Spleen (tissue), 13 donors: ENCODE measurements at regions of chr13 and their contacts with region 1.

Region 1: DNA sequence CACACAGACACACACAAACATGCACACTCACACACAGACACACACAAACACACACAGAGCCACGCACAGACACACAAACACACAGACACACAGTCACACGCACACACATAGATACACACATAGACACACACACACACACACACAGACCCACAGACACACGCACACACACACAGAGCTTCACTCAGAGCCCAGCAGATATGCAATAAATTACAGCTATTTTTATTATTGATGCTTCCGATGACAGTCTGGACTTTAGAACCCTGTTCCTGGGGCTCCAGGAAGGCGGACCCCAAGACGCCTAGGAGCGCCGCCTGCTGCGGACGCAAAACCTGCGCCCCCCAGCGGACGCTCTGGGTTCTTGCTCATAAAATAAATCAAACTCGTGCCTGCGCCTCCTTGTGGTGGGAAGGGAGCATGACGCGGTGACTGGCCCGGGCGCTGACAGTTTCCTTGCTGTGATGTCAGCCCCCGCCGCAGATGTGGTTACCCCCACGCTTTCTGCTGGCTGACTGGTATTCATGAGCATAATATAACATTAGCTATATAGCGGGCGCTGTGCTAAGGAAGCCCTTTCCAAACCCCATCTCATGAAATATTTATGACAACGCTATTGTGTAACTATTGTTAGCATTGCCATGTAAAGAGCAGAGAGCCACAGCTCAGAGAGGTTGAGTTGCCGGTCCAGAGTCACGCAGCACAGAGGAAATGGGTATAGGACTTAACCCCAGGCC is 64.4 kb upstream of the TM9SF2 start:
- DNase-seq: peak; percentile 98
- H3K4me3 ChIP-seq: peak overlapping the region in 4 of 8 donors; percentile 1 to 43 (median 5)
- H3K27ac ChIP-seq: peak overlapping the region in 3 of 8 donors; percentile 82 to 87 (median 84)
- H3K4me1 ChIP-seq: peaks cover 33 to 68% (median 51%) of the 10 kb centered on the region in 6 donors
- H3K27me3 ChIP-seq: peaks cover 0 to 8% (median 0%) of the 10 kb centered on the region in 7 donors
- CTCF ChIP-seq: peak; percentile 96 to 100 (median 100)
- POLR2A ChIP-seq: no peak

Region 2: GRCh38 chr13:99151516-99151915 is 285.3 kb before region 1 on chr13:
- intact Hi-C with region 1: no loop called
- DNase-seq: no peak
- H3K4me3 ChIP-seq: no peak overlapping the region
- H3K27ac ChIP-seq: no peak overlapping the region
- H3K4me1 ChIP-seq: no peaks in the 10 kb centered on the region
- H3K27me3 ChIP-seq: peaks cover 0 to 75% (median 0%) of the 10 kb centered on the region in 7 donors
- CTCF ChIP-seq: no peak
- POLR2A ChIP-seq: no peak

Region 3: GRCh38 chr13:99176309-99177276 is 260.3 kb before region 1 on chr13:
- intact Hi-C with region 1: loop called (anchors 2 kb)
- DNase-seq: peak; percentile 90
- H3K4me3 ChIP-seq: peak overlapping the region in 1 of 8 donors; percentile 36
- H3K27ac ChIP-seq: no peak overlapping the region
- H3K4me1 ChIP-seq: peaks cover 7 to 38% (median 26%) of the 10 kb centered on the region in 6 donors
- H3K27me3 ChIP-seq: peaks cover 0 to 38% (median 4%) of the 10 kb centered on the region in 7 donors
- CTCF ChIP-seq: peak; percentile 67 to 93 (median 89)
- POLR2A ChIP-seq: no peak

Region 4: GRCh38 chr13:99386911-99387788 is 49.7 kb before region 1 on chr13:
- intact Hi-C with region 1: loop called (anchors 5 kb)
- DNase-seq: peak; percentile 94
- H3K4me3 ChIP-seq: no peak overlapping the region
- H3K27ac ChIP-seq: peak overlapping the region in 7 of 8 donors; percentile 4 to 85 (median 36)
- H3K4me1 ChIP-seq: peaks cover 8 to 68% (median 42%) of the 10 kb centered on the region in 6 donors
- H3K27me3 ChIP-seq: no peaks in the 10 kb centered on the region
- CTCF ChIP-seq: peak; percentile 71 to 91 (median 85)
- POLR2A ChIP-seq: no peak